ENCODE measurements at regions of chr6 and their contacts with region 1.

Region 1: GRCh38 chr6:147506704-147507114 is 1.8 kb upstream of the SAMD5 start:
- DNase-seq: peak; percentile 57
- H3K4me3 ChIP-seq: peak overlapping the region; percentile 76 to 96 (median 87)
- H3K27ac ChIP-seq: peak overlapping the region; percentile 7
- H3K4me1 ChIP-seq: peaks cover 26% of the 10 kb centered on the region
- H3K27me3 ChIP-seq: no peaks in the 10 kb centered on the region
- CTCF ChIP-seq: peak; percentile 78 to 85
- POLR2A ChIP-seq: no peak

Region 2: GRCh38 chr6:146857180-146857979 is 649.3 kb before region 1 on chr6:
- CTCF ChIA-PET with region 1: no interaction called
- POLR2A ChIA-PET with region 1: no interaction called
- dilution Hi-C with region 1: no loop called
- intact Hi-C with region 1: loop called (anchors 1 kb)
- DNase-seq: peak; percentile 77
- H3K4me3 ChIP-seq: peak overlapping the region in 1 of 3 experiments; percentile 12
- H3K27ac ChIP-seq: no peak overlapping the region
- H3K4me1 ChIP-seq: peaks cover 2% of the 10 kb centered on the region
- H3K27me3 ChIP-seq: no peaks in the 10 kb centered on the region
- CTCF ChIP-seq: peak; percentile 93 to 96
- POLR2A ChIP-seq: no peak

Region 3: DNA sequence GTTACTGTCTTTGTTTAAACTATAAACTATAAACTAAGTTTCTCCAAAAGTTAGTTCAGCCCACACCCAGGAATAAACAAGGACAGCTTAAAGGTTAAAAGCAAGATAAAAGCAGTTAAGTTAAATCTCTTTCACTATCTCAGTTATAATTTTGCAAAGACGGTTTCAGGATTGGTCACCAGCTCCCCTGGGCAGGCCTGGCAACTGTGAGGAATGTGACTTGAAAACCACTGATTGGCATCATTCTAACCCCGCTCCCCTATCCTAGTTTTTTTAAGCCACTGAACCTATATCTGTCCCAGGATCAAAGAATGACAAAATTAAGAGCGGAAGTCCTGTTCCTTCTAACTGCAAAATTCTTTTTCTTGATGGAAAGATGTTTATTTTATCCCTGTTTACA is 36.1 kb after region 1 on chr6:
- CTCF ChIA-PET with region 1: no interaction called
- POLR2A ChIA-PET with region 1: no interaction called
- dilution Hi-C with region 1: no loop called
- intact Hi-C with region 1: no loop called
- DNase-seq: no peak
- H3K4me3 ChIP-seq: no peak overlapping the region
- H3K27ac ChIP-seq: no peak overlapping the region
- H3K4me1 ChIP-seq: no peaks in the 10 kb centered on the region
- H3K27me3 ChIP-seq: no peaks in the 10 kb centered on the region
- CTCF ChIP-seq: no peak
- POLR2A ChIP-seq: no peak

Region 4: DNA sequence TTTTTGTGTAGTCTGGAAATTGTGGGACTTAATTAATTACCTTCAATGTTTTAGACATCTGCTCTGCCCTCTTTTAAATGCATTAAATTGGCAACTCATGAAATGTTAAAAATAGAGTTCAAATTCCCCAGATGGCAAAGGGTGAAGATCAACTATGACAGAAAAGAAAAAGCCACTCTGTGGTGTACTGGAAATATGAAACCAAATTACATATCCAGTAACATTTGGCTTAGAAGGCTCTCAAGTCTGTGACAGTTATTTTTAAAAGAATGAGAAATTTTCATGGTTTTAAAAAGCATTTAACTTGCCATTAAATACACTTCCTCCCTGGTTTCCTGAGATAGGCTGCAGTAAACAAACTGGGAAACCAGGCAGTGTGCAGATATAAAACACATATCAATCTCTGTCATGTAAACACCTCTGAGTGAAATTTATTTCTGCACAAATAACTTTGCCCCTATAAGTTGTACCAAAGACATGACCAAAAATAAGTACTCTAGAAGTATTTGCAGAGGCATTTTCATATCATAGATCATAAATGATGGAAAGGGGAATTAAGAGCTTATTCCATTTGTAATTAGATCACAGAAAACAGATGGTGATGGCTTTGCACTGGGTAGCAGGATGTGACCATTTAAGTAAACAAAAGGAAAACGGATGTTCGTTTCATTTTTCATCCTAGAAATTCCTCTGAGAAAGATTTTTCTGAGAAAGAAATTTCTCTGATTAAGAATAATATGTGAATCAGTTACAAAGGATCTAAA is 361.9 kb after region 1 on chr6:
- CTCF ChIA-PET with region 1: interaction called, 3 read pairs
- POLR2A ChIA-PET with region 1: no interaction called
- dilution Hi-C with region 1: no loop called
- intact Hi-C with region 1: loop called (anchors 2 kb)
- DNase-seq: peak; percentile 80
- H3K4me3 ChIP-seq: peak overlapping the region in 1 of 3 experiments; percentile 32
- H3K27ac ChIP-seq: peak overlapping the region; percentile 90
- H3K4me1 ChIP-seq: peaks cover 34% of the 10 kb centered on the region
- H3K27me3 ChIP-seq: no peaks in the 10 kb centered on the region
- CTCF ChIP-seq: no peak
- POLR2A ChIP-seq: no peak

Region 5: DNA sequence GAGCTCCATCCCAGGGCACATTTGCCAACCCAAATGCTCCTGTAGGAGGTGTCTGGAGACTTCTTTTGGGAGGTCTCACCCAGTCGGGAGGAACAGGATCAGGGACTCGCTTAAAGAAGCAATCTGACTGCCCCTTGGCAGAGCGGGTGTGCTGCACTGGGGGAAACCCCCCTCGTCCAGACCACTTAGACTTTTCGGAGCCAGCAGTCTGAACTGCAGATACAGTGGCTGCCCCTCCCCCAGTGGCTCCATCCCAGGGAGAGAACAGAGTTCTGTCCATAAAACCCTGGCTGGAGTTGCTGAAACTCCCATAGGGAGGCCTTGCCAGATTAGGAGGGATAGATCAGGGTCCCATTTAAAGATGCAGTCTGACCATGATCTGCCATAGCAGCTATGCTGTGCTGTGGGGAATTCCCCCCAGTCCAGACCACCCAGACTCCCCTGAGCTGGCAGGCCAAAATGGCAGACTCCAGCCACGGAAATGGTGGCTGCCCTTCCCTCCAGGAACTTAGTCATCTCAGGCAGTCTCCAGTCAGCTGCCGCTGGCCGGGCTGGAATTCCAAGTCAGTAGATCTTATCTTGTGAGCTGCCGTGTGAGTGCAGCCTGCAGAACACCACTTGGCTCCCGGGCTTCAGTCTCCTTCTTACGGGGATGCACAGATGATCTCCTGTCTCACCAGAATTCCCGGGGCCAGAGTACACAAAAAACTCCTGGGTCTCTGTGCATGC is 557.9 kb after region 1 on chr6:
- CTCF ChIA-PET with region 1: no interaction called
- POLR2A ChIA-PET with region 1: no interaction called
- dilution Hi-C with region 1: no loop called
- intact Hi-C with region 1: loop called (anchors 2 kb)
- DNase-seq: peak; percentile 90
- H3K4me3 ChIP-seq: no peak overlapping the region
- H3K27ac ChIP-seq: peak overlapping the region; percentile 96
- H3K4me1 ChIP-seq: peaks cover 32% of the 10 kb centered on the region
- H3K27me3 ChIP-seq: no peaks in the 10 kb centered on the region
- CTCF ChIP-seq: no peak
- POLR2A ChIP-seq: no peak

Region 6: DNA sequence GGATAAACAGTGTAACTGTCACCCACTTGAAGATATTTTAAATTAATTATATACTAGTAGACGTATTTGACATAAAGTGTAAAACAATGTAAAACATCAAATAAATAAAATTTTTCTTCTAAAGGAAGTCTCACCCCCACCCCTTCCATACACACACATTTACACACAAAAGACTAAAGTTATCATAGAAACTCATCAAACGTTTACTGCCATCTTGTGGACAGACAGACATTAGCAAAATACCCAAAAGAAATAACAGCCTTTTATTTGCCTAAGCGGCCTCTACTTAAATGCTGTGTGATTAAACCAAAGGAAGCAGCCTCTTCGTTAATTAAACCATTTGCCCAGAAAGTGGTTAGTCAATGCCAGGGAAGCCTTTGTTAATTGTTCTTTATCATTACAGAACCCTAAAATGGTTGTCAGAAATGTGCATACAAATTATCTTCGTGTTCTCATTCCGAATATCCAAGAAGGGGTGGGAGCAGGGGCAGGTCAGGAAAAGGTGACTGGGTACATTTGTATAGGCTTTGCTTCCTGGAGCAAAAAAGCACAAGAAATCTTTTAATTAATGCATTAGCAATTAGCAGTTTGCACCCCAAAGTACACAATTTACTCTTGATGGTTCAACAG is 659.7 kb after region 1 on chr6:
- CTCF ChIA-PET with region 1: interaction called, 110 read pairs
- POLR2A ChIA-PET with region 1: no interaction called
- dilution Hi-C with region 1: loop called (anchors 25 kb)
- intact Hi-C with region 1: loop called (anchors 1 kb)
- DNase-seq: peak; percentile 75
- H3K4me3 ChIP-seq: no peak overlapping the region
- H3K27ac ChIP-seq: no peak overlapping the region
- H3K4me1 ChIP-seq: peaks cover 5% of the 10 kb centered on the region
- H3K27me3 ChIP-seq: no peaks in the 10 kb centered on the region
- CTCF ChIP-seq: peak; percentile 37 to 39
- POLR2A ChIP-seq: no peak

Region 7: DNA sequence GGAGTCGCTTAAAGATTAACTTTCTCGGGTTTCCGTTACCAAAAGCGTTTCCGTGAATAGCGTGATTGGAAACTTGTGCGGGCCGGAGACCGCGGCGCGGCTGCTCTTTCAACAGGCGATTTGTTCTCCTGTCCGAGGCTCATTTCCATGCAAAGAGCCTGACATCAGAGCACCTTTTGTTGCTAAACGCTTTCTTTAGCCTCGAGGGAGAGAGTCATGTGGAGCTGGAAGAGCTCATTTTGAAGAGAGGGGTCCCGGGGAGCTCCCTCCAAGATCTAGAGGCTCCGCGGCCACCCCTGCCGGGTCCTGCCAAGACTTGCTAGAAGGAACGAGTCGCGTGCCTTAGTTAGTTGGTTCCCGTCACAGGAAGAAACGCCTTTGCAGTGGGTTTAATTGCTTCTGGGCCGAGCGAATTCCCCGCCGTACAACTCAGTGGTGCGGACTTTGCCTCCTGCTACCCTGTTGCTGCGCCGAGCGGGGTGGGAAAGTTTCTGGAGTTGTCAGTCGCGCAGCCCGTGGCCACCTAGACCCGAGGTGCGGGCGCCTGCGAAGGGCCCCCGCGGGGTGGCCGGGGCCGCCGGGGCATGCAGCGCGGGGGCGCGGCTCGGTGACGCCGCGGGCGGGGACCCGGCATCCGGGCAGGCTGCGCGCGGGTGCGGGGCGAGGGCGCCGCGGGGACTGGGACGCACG is 835.8 kb after region 1 on chr6 and contains the start of gene SASH1:
- CTCF ChIA-PET with region 1: interaction called, 3 read pairs
- POLR2A ChIA-PET with region 1: no interaction called
- dilution Hi-C with region 1: no loop called
- intact Hi-C with region 1: loop called (anchors 5 kb)
- DNase-seq: peak; percentile 89
- H3K4me3 ChIP-seq: peak within 1 kb of the TSS; percentile 69 to 97 (median 96)
- H3K27ac ChIP-seq: peak within 1 kb of the TSS; percentile 94
- H3K4me1 ChIP-seq: peaks cover 53% of the 10 kb centered on the region
- H3K27me3 ChIP-seq: no peaks in the 10 kb centered on the region
- CTCF ChIP-seq: no peak
- POLR2A ChIP-seq: no peak
- total RNA-seq, gene SASH1: 97.5 and 103 TPM in 2 replicates

Region 8: GRCh38 chr6:148520109-148520841 is 1013.6 kb after region 1 on chr6:
- CTCF ChIA-PET with region 1: no interaction called
- POLR2A ChIA-PET with region 1: no interaction called
- dilution Hi-C with region 1: no loop called
- intact Hi-C with region 1: loop called (anchors 5 kb)
- DNase-seq: no peak
- H3K4me3 ChIP-seq: no peak overlapping the region
- H3K27ac ChIP-seq: no peak overlapping the region
- H3K4me1 ChIP-seq: peaks cover 10% of the 10 kb centered on the region
- H3K27me3 ChIP-seq: no peaks in the 10 kb centered on the region
- CTCF ChIP-seq: no peak
- POLR2A ChIP-seq: no peak